ENCODE measurements at regions of chr6 and their contacts with region 1.

Region 1: DNA sequence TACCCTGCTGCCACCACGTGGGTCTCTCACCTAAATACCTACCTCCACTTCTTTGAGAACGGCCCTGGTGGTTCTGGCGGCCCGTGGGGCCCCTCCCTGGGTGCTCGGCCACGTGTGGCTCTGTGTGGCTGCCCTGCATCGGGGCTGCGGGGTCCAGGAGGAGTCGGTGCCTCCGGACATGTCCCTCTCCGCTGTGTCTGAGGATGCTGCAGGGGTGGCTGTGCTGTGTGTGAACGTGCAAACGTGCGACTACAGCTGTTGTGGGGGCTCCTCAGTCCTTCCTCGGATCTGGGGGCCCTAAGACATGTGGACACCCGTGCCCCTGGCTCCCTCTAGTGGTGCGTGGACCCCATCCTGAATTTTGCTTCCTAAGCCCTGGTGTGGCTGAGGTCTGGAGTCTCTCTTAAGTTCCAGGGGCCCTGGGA is 691.8 kb downstream of the QKI start:
- DNase-seq: no peak
- ATAC-seq: peak; percentile 66
- H3K4me3 ChIP-seq: no peak overlapping the region
- H3K27ac ChIP-seq: no peak overlapping the region
- H3K4me1 ChIP-seq: no peaks in the 10 kb centered on the region
- H3K27me3 ChIP-seq: no peaks in the 10 kb centered on the region
- CTCF ChIP-seq: peak; percentile 27 to 38 (median 36); a peak in 3 of 6 replicates
- EP300 ChIP-seq: no peak
- POLR2A ChIP-seq: no peak
- RAD21 ChIP-seq: peak; percentile 51

Region 2: GRCh38 chr6:164130151-164130550 is 23.8 kb after region 1 on chr6:
- CTCF ChIA-PET with region 1: no interaction called
- POLR2A ChIA-PET with region 1: no interaction called
- RAD21 ChIA-PET with region 1: no interaction called
- SMC1A ChIA-PET with region 1: no interaction called
- in situ Hi-C with region 1: no loop called
- intact Hi-C with region 1: no loop called
- DNase-seq: no peak
- ATAC-seq: no peak
- H3K4me3 ChIP-seq: no peak overlapping the region
- H3K27ac ChIP-seq: no peak overlapping the region
- H3K4me1 ChIP-seq: no peaks in the 10 kb centered on the region
- H3K27me3 ChIP-seq: no peaks in the 10 kb centered on the region
- CTCF ChIP-seq: no peak
- EP300 ChIP-seq: no peak
- POLR2A ChIP-seq: no peak
- RAD21 ChIP-seq: no peak

Region 3: DNA sequence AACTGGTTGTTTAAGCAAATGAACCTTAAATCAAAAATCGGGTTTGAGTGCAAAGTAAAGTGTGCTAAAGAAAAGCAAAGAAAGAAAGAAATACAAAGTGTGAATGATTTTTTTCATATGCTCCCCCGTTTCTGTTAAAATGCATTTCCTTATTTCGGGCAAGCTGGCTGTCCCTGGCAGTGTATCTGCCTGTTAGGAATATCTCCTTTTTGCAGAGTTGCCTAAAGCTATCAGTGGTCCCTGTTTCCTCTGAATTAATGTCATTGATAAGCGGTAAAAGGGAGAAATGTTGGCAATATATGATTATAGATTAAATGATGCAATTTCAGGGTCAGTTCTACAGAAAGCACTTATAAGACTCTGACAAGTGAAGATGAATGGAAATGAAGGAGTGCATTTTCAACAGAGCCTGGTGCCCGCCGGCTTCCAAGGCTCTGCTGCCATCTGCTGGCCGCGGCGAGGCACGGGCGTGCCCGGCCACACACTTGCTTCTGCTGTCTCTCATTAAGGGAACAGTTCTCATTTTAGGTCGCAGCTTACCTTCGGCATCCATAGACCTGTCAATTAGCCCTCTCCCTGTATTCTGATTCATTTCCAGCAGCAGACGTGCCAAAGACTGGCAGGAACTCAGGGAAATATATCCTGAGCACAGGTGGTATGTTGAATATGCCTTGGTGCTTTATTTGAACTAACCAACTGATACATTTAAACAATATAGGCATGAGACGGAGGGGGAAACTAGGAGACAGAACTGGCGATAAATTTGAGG is 821.1 kb after region 1 on chr6:
- CTCF ChIA-PET with region 1: no interaction called
- POLR2A ChIA-PET with region 1: no interaction called
- RAD21 ChIA-PET with region 1: no interaction called
- SMC1A ChIA-PET with region 1: no interaction called
- in situ Hi-C with region 1: no loop called
- intact Hi-C with region 1: loop called (anchors 10 kb)
- DNase-seq: no peak
- ATAC-seq: peak; percentile 99
- H3K4me3 ChIP-seq: no peak overlapping the region
- H3K27ac ChIP-seq: no peak overlapping the region
- H3K4me1 ChIP-seq: no peaks in the 10 kb centered on the region
- H3K27me3 ChIP-seq: no peaks in the 10 kb centered on the region
- CTCF ChIP-seq: peak; percentile 65 to 97 (median 84)
- EP300 ChIP-seq: no peak
- POLR2A ChIP-seq: no peak
- RAD21 ChIP-seq: peak; percentile 93

Measured in GM12878 (cell line).